A673 (cell line): ENCODE measurements at regions of chr5 and their contacts with region 1.

Region 1: GRCh38 chr5:33997331-33997983 is 10.4 kb downstream of the AMACR start:
- DNase-seq: peak; percentile 81
- H3K4me3 ChIP-seq: no peak overlapping the region
- H3K27ac ChIP-seq: no peak overlapping the region
- H3K4me1 ChIP-seq: no peaks in the 10 kb centered on the region
- H3K27me3 ChIP-seq: no peaks in the 10 kb centered on the region
- CTCF ChIP-seq: peak; percentile 80

Region 2: DNA sequence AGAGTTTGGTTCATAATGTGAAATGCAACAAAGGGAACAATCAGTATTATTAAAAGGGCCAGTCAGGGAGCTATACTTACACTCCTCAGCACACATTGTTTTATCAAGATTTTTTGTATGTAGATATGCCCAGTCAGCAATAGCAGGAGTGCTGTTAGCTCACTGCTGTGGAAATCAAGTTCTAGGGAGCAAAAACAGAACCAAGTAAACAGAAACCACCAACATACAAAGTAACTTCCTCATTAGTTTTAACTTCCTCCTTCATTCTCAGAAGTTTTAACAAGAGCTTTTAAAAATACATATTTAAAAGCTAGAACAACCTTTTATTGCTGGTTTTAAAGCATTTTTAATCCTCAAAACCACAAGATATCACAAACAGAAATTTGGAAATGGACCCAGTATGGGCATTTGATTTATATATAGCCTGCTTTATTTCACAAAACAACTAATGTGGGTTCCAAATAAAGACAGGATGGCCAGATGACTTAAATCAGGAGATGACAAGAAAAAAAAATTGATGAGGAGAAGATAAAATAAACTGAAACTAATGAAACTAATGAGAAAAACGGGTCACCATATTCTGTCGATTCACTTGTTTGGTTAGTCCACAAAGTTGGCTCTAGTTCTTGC is 284.2 kb before region 1 on chr5:
- CTCF ChIA-PET with region 1: no interaction called
- POLR2A ChIA-PET with region 1: no interaction called
- intact Hi-C with region 1: no loop called
- DNase-seq: no peak
- H3K4me3 ChIP-seq: no peak overlapping the region
- H3K27ac ChIP-seq: no peak overlapping the region
- H3K4me1 ChIP-seq: no peaks in the 10 kb centered on the region
- H3K27me3 ChIP-seq: no peaks in the 10 kb centered on the region
- CTCF ChIP-seq: no peak

Region 3: DNA sequence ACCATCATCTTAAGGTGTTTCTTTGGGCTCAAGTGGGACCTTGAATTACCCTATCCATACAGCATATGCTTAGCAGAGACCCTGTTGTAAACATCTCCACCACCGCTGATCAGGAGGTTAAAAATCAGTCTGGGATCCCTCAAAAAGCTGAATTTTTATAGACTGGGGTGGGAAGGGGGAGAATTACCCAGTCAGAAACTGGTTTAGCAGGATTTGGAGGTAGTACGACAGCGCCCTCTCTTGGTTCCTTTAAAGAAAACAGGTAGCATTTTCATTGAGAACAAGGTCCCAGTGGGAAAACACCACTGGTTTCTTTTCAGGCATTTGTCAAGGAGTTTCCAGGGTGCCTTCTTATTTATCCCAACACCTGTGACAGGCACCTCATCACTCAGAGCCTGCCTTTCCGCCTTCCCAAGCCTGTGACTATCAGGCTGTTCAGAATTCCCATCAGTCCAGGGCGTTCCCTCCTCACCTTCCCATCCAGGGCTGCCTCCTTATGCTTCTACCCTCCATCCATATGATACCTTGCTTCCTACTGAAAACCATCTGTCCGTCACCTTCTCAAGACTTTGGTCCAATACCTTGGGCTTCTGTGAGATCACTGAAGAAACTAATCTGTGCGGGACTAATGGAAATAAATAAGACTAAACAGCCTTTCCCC is 454.8 kb after region 1 on chr5:
- CTCF ChIA-PET with region 1: no interaction called
- POLR2A ChIA-PET with region 1: no interaction called
- intact Hi-C with region 1: loop called (anchors 5 kb)
- DNase-seq: peak; percentile 51
- H3K4me3 ChIP-seq: no peak overlapping the region
- H3K27ac ChIP-seq: no peak overlapping the region
- H3K4me1 ChIP-seq: no peaks in the 10 kb centered on the region
- H3K27me3 ChIP-seq: no peaks in the 10 kb centered on the region
- CTCF ChIP-seq: peak; percentile 53

Region 4: GRCh38 chr5:34464830-34465229 is 467.4 kb after region 1 on chr5:
- CTCF ChIA-PET with region 1: no interaction called
- POLR2A ChIA-PET with region 1: no interaction called
- intact Hi-C with region 1: loop called (anchors 2 kb)
- DNase-seq: no peak
- H3K4me3 ChIP-seq: no peak overlapping the region
- H3K27ac ChIP-seq: no peak overlapping the region
- H3K4me1 ChIP-seq: no peaks in the 10 kb centered on the region
- H3K27me3 ChIP-seq: no peaks in the 10 kb centered on the region
- CTCF ChIP-seq: no peak

Region 5: DNA sequence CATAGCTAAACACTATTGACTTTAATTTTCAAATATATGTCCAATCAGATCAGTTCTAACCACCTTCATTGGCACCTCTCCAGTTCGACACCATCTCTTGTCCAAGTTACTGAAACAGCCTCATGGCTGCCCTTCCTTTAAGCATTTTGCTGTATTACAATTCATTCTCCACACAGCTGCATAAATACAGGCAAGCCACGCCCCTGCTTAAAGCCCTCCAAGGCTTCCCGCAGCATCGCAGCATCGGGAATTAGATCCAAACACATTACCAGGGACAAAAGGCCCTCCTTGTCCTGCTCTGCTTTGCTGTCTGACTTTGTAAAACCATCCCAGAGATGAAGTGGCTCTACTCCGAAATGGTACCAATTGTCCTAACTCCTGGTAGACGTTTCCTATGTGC is 583.5 kb after region 1 on chr5:
- CTCF ChIA-PET with region 1: no interaction called
- POLR2A ChIA-PET with region 1: no interaction called
- intact Hi-C with region 1: no loop called
- DNase-seq: peak; percentile 18
- H3K4me3 ChIP-seq: no peak overlapping the region
- H3K27ac ChIP-seq: no peak overlapping the region
- H3K4me1 ChIP-seq: no peaks in the 10 kb centered on the region
- H3K27me3 ChIP-seq: no peaks in the 10 kb centered on the region
- CTCF ChIP-seq: no peak